ENCODE measurements at regions of chr9 and their contacts with region 1.

Region 1: DNA sequence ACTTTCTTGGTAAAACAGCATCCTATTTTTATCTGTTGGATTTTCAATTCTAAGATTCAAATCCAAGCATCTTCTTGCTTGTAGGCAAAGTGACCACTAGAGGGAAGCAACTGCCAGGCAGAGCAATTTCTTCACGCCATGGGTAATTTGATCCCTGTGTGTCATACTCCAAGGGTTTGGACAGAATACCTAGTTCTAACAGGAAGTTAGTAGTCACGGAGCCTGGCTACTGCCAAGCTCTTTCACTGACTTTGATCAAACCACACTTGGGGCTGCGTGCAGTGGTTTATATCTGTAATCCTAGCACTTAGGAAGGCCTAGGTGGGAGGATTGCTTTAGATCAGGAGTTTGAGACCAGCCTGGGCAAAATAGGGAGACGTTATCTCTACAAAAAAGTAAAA is 473.6 kb upstream of the TNC start:
- DNase-seq: peak; percentile 7
- ATAC-seq: no peak
- H3K4me3 Mint-ChIP-seq: no peak overlapping the region
- H3K27ac Mint-ChIP-seq: no peak overlapping the region
- H3K4me1 Mint-ChIP-seq: no peaks in the 10 kb centered on the region
- H3K27me3 Mint-ChIP-seq: peaks cover 15% of the 10 kb centered on the region
- CTCF ChIP-seq: peak; percentile 48

Region 2: DNA sequence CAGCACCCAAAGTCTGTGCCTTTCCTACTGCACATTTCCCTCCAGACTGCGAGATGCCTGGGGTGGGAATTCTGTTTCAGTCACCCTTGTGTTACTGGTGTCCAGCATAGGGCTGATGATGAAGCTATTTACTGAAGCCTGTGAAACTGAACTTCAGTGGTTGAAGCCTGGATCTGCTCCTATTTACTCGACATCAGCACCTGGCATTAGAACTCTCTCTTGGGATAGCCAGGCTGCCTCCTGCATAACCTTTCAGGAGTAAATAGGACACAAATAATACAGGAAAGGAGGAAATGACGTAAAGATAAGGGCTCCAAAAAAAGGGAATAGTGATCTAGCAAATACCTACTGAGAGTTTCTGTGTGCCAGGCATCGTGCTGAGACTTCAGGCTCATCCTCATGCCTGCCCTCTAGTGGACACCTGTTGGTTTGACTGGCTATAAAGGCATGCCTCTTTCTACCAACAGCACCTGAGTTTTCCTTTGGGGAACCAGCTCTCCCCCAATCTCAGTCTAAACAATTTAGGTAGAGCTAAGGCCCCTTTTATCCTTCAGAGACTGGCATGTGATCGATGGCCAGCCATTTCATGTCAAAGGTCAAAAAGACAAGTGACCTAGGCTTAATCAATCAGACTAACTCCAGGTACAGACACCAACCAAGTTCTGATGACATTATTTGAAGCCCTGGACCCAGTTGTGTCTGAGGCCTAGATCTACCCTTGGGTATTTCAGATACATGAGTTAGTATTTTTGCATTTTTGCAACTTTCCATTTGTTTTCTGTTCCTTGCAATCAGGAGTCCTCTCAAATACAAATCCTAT is 903.4 kb after region 1 on chr9:
- CTCF ChIA-PET with region 1: interaction called, 3 read pairs
- POLR2A ChIA-PET with region 1: no interaction called
- intact Hi-C with region 1: loop called (anchors 10 kb)
- DNase-seq: peak; percentile 61
- ATAC-seq: no peak
- H3K4me3 Mint-ChIP-seq: no peak overlapping the region
- H3K27ac Mint-ChIP-seq: no peak overlapping the region
- H3K4me1 Mint-ChIP-seq: no peaks in the 10 kb centered on the region
- H3K27me3 Mint-ChIP-seq: no peaks in the 10 kb centered on the region
- CTCF ChIP-seq: peak; percentile 69

Region 3: DNA sequence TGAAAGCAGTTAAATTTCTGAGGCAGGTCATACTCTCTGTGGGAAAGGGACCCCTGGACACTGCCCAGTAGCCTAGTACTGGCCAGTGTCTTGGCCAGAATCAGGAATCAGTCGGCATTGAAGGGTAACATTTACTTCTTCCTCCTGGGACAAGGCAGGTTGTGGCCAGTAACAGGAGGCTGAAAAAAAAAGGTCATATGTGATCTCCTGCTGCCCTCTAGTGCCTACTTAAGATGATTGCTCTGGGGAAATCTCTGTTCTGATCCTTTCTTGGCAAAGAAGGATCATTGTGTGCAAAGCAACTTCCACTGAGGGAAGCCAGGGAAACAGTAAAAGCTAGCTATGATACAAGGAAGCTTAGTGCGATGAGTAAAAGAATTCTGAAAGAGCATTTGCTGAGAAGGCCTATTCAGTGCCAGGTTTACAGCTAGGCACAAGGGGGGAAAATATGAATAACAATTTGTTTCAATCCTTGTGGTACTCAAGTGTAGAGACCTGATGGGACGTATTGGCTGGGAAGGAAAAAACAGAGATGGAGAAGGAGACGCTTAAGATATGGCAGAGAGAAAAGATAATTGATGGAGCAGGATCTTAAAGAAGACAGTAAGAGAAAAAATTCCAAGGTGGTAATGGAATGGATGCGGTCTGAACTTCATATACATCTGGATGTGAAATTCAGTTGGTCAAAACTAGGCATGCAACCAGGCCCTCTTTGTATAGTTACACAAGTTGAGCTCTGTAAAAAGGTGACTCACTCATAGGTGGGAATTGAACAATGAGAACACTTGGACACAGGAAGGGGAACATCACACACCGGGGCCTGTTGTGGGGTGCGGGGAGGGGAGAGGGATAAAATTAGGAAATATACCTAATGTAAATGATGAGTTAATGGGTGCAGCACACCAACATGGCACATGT is 1069.7 kb after region 1 on chr9:
- CTCF ChIA-PET with region 1: interaction called, 8 read pairs
- POLR2A ChIA-PET with region 1: no interaction called
- intact Hi-C with region 1: loop called (anchors 10 kb)
- DNase-seq: peak; percentile 13
- ATAC-seq: peak; percentile 42
- H3K4me3 Mint-ChIP-seq: no peak overlapping the region
- H3K27ac Mint-ChIP-seq: no peak overlapping the region
- H3K4me1 Mint-ChIP-seq: peaks cover 4% of the 10 kb centered on the region
- H3K27me3 Mint-ChIP-seq: no peaks in the 10 kb centered on the region
- CTCF ChIP-seq: peak; percentile 76

Region 4: DNA sequence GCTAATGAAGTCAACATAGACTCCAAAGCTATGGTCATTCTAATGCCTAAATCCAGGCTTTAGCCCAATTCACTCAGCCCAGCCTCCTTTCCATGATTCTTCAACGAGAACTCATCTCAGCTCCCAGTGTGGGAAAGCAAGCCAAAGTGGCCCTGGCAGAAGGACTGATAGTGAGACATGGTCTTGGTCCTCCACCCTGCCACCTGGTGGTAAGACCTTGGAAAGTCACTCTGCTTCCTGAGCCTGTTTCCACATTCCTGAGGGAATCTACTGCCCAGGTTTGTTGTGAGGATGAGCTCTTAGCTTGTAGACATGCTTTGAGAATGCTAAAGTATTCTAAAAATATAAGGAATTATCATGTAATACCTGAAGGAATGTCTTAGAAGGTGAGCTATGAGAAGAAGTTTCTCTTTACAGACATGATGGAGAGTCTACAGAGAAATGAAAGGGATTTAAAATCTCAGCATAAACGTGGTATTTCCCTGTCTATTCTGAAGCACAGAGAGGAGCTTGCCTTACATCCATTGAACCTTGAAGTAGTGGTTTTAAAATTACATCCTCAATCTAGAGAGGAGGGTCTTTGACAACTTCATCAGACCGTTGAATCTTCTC is 1269.0 kb after region 1 on chr9:
- CTCF ChIA-PET with region 1: interaction called, 13 read pairs
- POLR2A ChIA-PET with region 1: no interaction called
- intact Hi-C with region 1: no loop called
- DNase-seq: peak; percentile 26
- ATAC-seq: no peak
- H3K4me3 Mint-ChIP-seq: no peak overlapping the region
- H3K27ac Mint-ChIP-seq: no peak overlapping the region
- H3K4me1 Mint-ChIP-seq: no peaks in the 10 kb centered on the region
- H3K27me3 Mint-ChIP-seq: peaks cover 2% of the 10 kb centered on the region
- CTCF ChIP-seq: peak; percentile 68

Measured in activated CD8-positive, alpha-beta T cell treated with anti-CD3 and anti-CD28 coated beads for 36 hours (primary cell).